Posterior vena cava (tissue), 2 donors: ENCODE measurements at regions of chr18 and their contacts with region 1.

Region 1: GRCh38 chr18:50711386-50711785 is 108.4 kb downstream of the MRO start:
- DNase-seq: peak; percentile 36

Region 2: DNA sequence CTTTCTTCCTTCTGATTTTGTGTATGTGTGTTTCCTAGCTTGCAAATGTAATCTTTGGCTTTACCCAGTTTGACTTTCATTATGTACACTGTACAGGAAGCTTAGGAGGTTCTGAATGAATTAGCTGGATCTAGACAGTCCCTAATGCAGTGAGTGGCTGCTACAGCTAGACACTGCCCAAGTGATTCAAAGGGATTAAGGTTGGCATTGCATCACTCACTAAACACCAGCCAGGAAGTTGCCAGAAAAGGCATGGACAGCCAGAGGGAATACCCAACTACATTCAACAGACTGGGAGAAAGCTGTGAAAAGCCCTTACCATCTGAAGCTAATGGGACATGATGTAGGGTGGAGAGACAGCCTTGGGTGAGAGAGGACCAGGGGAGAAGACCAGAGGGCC is 802.2 kb after region 1 on chr18:
- intact Hi-C with region 1: loop called in 1 of 2 experiments (anchors 5 kb)
- DNase-seq: no peak